Activated CD8-positive, alpha-beta T cell treated with anti-CD3 and anti-CD28 coated beads, Interleukin-2, amount 10 ng/mL, durations not matched to agents 7 days and 5 days (primary cell): ENCODE measurements at regions of chr1 and their contacts with region 1.

Region 1: GRCh38 chr1:66360285-66360724 is 173.6 kb upstream of the SGIP1 start:
- DNase-seq: no peak
- ATAC-seq: no peak
- H3K4me3 Mint-ChIP-seq: no peak overlapping the region
- H3K27ac Mint-ChIP-seq: no peak overlapping the region
- H3K4me1 Mint-ChIP-seq: peaks cover 62% of the 10 kb centered on the region
- H3K27me3 Mint-ChIP-seq: no peaks in the 10 kb centered on the region

Region 2: DNA sequence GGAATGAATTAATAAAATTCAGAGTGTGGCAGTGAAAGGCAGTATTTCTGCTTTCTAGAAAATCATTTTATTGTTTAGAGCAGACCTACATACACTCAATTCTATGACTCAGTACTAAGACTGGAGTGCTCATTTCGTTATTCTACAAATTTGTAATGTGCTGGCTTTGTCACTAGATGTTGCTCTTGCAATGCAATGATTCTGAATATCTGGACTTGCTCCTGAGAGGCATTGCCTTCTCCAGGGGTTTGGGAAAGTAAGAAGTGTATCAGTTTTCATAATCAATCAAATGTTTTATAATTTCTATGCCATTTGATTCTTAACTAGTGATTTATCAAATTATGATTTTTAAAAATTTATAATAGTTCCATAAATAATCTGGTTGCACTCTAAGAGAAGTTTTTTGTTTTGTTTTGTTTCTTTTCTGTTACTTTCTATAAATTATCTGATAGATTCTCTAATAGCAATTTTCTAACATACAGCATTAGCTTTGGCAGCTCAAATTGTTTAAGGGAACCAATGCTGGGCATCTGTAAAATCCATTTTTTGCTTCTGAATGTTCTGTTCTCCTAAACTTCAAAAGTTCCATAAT is 106.9 kb before region 1 on chr1:
- CTCF ChIA-PET with region 1: interaction called, 20 read pairs
- POLR2A ChIA-PET with region 1: no interaction called
- DNase-seq: peak; percentile 46
- ATAC-seq: peak; percentile 83
- H3K4me3 Mint-ChIP-seq: no peak overlapping the region
- H3K27ac Mint-ChIP-seq: no peak overlapping the region
- H3K4me1 Mint-ChIP-seq: peaks cover 37% of the 10 kb centered on the region
- H3K27me3 Mint-ChIP-seq: no peaks in the 10 kb centered on the region

Region 3: DNA sequence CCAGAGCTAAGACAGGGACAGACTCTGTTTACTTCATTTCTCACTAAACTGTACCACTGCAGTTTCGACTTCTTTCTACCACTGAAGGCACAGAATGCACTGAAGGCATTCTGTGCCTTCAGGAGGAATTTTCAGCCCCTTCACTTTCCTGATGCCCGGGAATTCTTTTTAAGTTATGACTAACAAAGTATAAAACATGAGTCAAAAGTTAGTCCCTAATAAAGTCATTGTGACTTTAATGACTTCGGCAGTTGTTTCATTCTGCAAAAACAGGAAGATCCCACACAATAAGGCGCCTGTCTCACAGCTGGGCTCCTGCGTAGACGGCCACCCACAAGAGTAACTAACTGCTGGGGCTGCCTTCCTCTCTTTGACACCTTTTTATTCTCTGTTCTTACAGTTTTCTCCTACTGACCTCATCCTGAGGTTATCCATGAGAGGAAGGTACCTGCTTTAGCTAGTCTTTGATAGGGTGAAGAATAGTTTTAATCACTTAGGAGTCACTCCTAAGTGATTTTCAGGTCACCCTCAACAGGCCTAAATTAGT is 10.2 kb before region 1 on chr1:
- CTCF ChIA-PET with region 1: interaction called, 26 read pairs
- POLR2A ChIA-PET with region 1: interaction called, 3 read pairs
- DNase-seq: peak; percentile 60
- ATAC-seq: peak; percentile 67
- H3K4me3 Mint-ChIP-seq: peak overlapping the region; percentile 77
- H3K27ac Mint-ChIP-seq: peak overlapping the region; percentile 84
- H3K4me1 Mint-ChIP-seq: peaks cover 88% of the 10 kb centered on the region
- H3K27me3 Mint-ChIP-seq: no peaks in the 10 kb centered on the region

Region 4: DNA sequence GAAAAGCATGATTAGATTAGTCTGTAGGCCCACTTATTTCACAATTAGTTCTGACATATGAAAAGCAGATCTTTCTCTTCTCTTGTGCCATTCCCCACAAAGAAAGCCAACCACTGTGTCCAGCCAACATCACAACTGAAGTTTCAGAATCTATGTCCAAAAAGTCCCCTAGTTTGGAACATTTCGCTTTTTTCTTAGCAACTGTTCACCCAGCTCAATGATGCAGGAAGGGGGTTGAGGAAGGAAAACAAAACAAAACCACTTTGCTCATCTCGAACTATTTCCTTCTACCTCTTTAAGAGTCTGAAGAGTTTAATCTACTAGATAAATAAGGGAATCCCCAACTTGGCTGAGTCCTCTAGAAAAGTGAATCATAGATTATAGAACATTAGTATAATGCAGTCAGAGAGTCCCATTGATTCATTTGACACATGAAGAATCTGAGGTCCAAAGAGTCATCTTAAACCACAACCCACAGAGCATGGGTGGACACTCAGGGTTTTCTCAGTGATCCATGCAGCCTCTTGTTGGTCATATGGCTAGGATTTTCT is 14.3 kb after region 1 on chr1:
- CTCF ChIA-PET with region 1: interaction called, 12 read pairs
- POLR2A ChIA-PET with region 1: no interaction called
- DNase-seq: no peak
- ATAC-seq: peak; percentile 49
- H3K4me3 Mint-ChIP-seq: peak overlapping the region; percentile 49
- H3K27ac Mint-ChIP-seq: peak overlapping the region; percentile 89
- H3K4me1 Mint-ChIP-seq: peaks cover 53% of the 10 kb centered on the region
- H3K27me3 Mint-ChIP-seq: no peaks in the 10 kb centered on the region